ENCODE measurements at regions of chr11 and their contacts with region 1.

Region 1: GRCh38 chr11:14907411-14908213 is 15.6 kb upstream of the CYP2R1 start:
- DNase-seq: peak; percentile 94
- H3K4me3 Mint-ChIP-seq: no peak overlapping the region
- H3K27ac Mint-ChIP-seq: no peak overlapping the region
- H3K4me1 Mint-ChIP-seq: peaks cover 39% of the 10 kb centered on the region
- H3K27me3 Mint-ChIP-seq: no peaks in the 10 kb centered on the region

Region 2: GRCh38 chr11:14463623-14464022 is 444.0 kb before region 1 on chr11:
- CTCF ChIA-PET with region 1: interaction called, 15 read pairs
- intact Hi-C with region 1: no loop called
- DNase-seq: no peak
- H3K4me3 Mint-ChIP-seq: no peak overlapping the region
- H3K27ac Mint-ChIP-seq: no peak overlapping the region
- H3K4me1 Mint-ChIP-seq: peaks cover 12% of the 10 kb centered on the region
- H3K27me3 Mint-ChIP-seq: no peaks in the 10 kb centered on the region

Region 3: GRCh38 chr11:14578541-14578956 is 329.1 kb before region 1 on chr11:
- CTCF ChIA-PET with region 1: interaction called, 7 read pairs
- intact Hi-C with region 1: loop called (anchors 1 kb)
- DNase-seq: peak; percentile 67
- H3K4me3 Mint-ChIP-seq: peak overlapping the region; percentile 11
- H3K27ac Mint-ChIP-seq: peak overlapping the region; percentile 75
- H3K4me1 Mint-ChIP-seq: peaks cover 47% of the 10 kb centered on the region
- H3K27me3 Mint-ChIP-seq: no peaks in the 10 kb centered on the region

Region 4: DNA sequence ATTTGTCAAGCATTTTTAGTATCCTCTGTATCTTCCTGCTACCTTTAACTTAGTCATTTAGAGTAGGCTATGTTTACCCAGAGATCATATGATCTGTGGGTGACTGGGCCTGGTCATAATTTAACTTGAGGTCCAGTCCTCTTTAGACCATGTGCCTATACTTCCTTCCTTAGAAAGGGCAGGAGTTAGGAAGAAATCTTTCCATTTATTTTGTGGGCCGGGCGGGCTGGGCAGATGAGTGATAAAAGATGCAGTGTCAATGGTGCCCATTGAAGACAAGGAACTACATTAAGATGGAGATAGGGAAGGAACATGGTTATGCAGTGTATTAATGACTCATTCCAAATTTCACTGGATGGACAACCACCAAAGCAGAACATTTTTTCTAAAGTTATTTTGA is 294.9 kb before region 1 on chr11:
- CTCF ChIA-PET with region 1: no interaction called
- intact Hi-C with region 1: no loop called
- DNase-seq: no peak
- H3K4me3 Mint-ChIP-seq: no peak overlapping the region
- H3K27ac Mint-ChIP-seq: no peak overlapping the region
- H3K4me1 Mint-ChIP-seq: peaks cover 34% of the 10 kb centered on the region
- H3K27me3 Mint-ChIP-seq: no peaks in the 10 kb centered on the region

Region 5: GRCh38 chr11:14713496-14714244 is 193.9 kb before region 1 on chr11:
- CTCF ChIA-PET with region 1: no interaction called
- intact Hi-C with region 1: no loop called
- DNase-seq: peak; percentile 55
- H3K4me3 Mint-ChIP-seq: peak overlapping the region; percentile 72
- H3K27ac Mint-ChIP-seq: peak overlapping the region; percentile 87
- H3K4me1 Mint-ChIP-seq: peaks cover 46% of the 10 kb centered on the region
- H3K27me3 Mint-ChIP-seq: no peaks in the 10 kb centered on the region

Region 6: DNA sequence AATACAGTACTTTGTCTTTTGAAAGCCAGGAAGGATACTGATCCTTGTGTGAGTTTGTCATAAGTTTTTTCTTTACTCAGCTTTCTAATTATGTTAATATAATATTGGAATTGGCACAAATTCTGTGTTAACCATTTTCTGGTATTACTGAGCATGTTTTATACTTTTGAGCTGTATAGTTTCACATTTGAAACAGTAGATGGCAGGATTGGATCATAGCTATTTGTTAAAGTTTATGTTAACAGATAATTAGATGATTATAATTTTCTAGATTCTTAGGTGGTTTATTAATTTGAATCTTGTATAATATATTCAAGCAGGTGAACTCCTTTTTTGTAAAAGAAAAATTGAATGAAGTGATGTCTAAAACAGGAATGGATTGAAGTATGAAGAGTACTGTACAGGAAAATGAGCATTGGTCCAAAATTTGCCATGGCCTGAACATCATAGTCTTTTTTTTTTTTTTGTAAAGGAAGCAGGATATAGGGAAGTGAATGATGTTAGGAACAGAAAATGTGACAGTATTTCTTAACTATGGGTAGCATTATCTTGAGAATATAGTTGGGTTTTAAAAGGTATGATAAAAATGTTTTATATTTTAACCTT is 117.6 kb before region 1 on chr11:
- CTCF ChIA-PET with region 1: interaction called, 181 read pairs
- intact Hi-C with region 1: loop called (anchors 1 kb)
- DNase-seq: no peak
- H3K4me3 Mint-ChIP-seq: no peak overlapping the region
- H3K27ac Mint-ChIP-seq: no peak overlapping the region
- H3K4me1 Mint-ChIP-seq: peaks cover 6% of the 10 kb centered on the region
- H3K27me3 Mint-ChIP-seq: no peaks in the 10 kb centered on the region

Region 7: GRCh38 chr11:14927146-14927545 is 19.5 kb after region 1 on chr11:
- CTCF ChIA-PET with region 1: interaction called, 41 read pairs
- intact Hi-C with region 1: no loop called
- DNase-seq: no peak
- H3K4me3 Mint-ChIP-seq: no peak overlapping the region
- H3K27ac Mint-ChIP-seq: no peak overlapping the region
- H3K4me1 Mint-ChIP-seq: no peaks in the 10 kb centered on the region
- H3K27me3 Mint-ChIP-seq: no peaks in the 10 kb centered on the region

Region 8: GRCh38 chr11:15074206-15075161 is 166.9 kb after region 1 on chr11:
- CTCF ChIA-PET with region 1: interaction called, 115 read pairs
- intact Hi-C with region 1: loop called (anchors 1 kb)
- DNase-seq: peak; percentile 94
- H3K4me3 Mint-ChIP-seq: peak overlapping the region; percentile 86
- H3K27ac Mint-ChIP-seq: peak overlapping the region; percentile 43
- H3K4me1 Mint-ChIP-seq: peaks cover 10% of the 10 kb centered on the region
- H3K27me3 Mint-ChIP-seq: peaks cover 9% of the 10 kb centered on the region

Region 9: DNA sequence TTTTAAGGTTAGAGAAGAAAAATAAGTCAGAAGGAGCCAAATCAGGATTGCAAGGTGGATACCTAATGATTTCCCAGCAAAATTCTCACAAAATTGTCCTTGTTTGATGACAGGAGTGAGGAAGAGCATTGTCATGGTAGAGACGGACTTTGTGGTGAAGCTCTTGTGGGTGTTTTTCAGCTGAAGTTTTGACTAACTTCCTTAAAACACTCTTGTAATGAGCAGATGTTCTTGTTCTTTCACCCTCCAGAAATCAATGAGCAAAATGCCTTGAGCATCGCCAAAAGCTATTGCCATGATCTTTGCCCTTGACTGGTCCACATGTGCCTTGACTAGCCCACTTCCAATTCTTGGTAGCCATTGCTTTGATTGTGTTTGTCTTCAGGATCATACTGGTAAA is 185.8 kb after region 1 on chr11:
- CTCF ChIA-PET with region 1: no interaction called
- intact Hi-C with region 1: no loop called
- DNase-seq: no peak
- H3K4me3 Mint-ChIP-seq: no peak overlapping the region
- H3K27ac Mint-ChIP-seq: no peak overlapping the region
- H3K4me1 Mint-ChIP-seq: no peaks in the 10 kb centered on the region
- H3K27me3 Mint-ChIP-seq: peaks cover 6% of the 10 kb centered on the region

Region 10: GRCh38 chr11:15180212-15180792 is 272.7 kb after region 1 on chr11:
- CTCF ChIA-PET with region 1: no interaction called
- intact Hi-C with region 1: no loop called
- DNase-seq: peak; percentile 7
- H3K4me3 Mint-ChIP-seq: no peak overlapping the region
- H3K27ac Mint-ChIP-seq: no peak overlapping the region
- H3K4me1 Mint-ChIP-seq: no peaks in the 10 kb centered on the region
- H3K27me3 Mint-ChIP-seq: peaks cover 2% of the 10 kb centered on the region

Measured in activated naive CD4-positive, alpha-beta T cell treated with anti-CD3 and anti-CD28 coated beads for 36 hours (primary cell).